Calu3 (cell line): ENCODE measurements at regions of chr11 and their contacts with region 1.

Region 1: GRCh38 chr11:6353367-6353987 is 33.2 kb upstream of the CAVIN3 start:
- DNase-seq: peak; percentile 78
- H3K4me3 Mint-ChIP-seq: no peak overlapping the region
- H3K27ac Mint-ChIP-seq: no peak overlapping the region
- H3K4me1 Mint-ChIP-seq: peaks cover 22% of the 10 kb centered on the region
- H3K27me3 Mint-ChIP-seq: no peaks in the 10 kb centered on the region
- CTCF ChIP-seq: peak; percentile 93

Region 2: DNA sequence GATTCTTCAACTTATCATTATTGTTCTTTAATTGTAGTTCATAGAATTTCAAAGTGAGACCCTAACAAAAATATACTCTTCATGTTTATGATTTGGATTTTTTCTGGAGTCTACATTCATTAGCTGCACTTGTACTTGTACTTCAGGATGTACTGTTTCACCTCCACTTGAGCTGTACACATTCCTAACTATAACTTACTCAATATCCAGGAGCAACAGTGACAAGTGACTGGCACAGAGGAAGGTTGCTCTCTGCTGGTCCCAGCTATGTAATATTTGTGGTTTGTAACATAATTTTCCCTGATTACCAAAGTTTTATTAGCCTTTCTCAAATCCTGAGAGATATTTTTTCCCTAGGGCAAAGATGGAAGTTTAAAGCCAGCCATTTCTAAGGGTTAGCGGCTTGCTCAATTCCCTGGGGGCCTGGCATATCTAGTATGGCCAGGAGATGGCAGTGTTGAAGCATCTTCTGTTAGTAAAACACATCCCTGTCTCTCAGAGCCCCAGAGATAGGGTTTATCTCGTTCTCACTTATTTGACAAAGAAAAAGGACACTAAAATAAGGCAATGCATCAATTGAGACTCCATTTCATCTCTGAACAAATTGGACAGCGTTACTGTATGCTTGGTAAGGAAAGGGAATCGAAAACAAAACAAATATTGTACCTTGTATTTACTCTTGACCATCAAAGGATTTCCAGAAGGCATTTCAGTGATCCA is 1229.5 kb before region 1 on chr11:
- CTCF ChIA-PET with region 1: no interaction called
- intact Hi-C with region 1: loop called (anchors 5 kb)
- DNase-seq: peak; percentile 68
- H3K4me3 Mint-ChIP-seq: no peak overlapping the region
- H3K27ac Mint-ChIP-seq: no peak overlapping the region
- H3K4me1 Mint-ChIP-seq: no peaks in the 10 kb centered on the region
- H3K27me3 Mint-ChIP-seq: peaks cover 23% of the 10 kb centered on the region
- CTCF ChIP-seq: peak; percentile 54

Region 3: GRCh38 chr11:5992604-5993251 is 360.7 kb before region 1 on chr11:
- CTCF ChIA-PET with region 1: interaction called, 9 read pairs
- intact Hi-C with region 1: loop called (anchors 1 kb)
- DNase-seq: peak; percentile 10
- H3K4me3 Mint-ChIP-seq: no peak overlapping the region
- H3K27ac Mint-ChIP-seq: no peak overlapping the region
- H3K4me1 Mint-ChIP-seq: no peaks in the 10 kb centered on the region
- H3K27me3 Mint-ChIP-seq: peaks cover 2% of the 10 kb centered on the region
- CTCF ChIP-seq: no peak

Region 4: GRCh38 chr11:6251120-6251733 is 102.2 kb before region 1 on chr11:
- CTCF ChIA-PET with region 1: interaction called, 33 read pairs
- intact Hi-C with region 1: loop called (anchors 1 kb)
- DNase-seq: peak; percentile 83
- H3K4me3 Mint-ChIP-seq: no peak overlapping the region
- H3K27ac Mint-ChIP-seq: no peak overlapping the region
- H3K4me1 Mint-ChIP-seq: no peaks in the 10 kb centered on the region
- H3K27me3 Mint-ChIP-seq: no peaks in the 10 kb centered on the region
- CTCF ChIP-seq: peak; percentile 76

Region 5: DNA sequence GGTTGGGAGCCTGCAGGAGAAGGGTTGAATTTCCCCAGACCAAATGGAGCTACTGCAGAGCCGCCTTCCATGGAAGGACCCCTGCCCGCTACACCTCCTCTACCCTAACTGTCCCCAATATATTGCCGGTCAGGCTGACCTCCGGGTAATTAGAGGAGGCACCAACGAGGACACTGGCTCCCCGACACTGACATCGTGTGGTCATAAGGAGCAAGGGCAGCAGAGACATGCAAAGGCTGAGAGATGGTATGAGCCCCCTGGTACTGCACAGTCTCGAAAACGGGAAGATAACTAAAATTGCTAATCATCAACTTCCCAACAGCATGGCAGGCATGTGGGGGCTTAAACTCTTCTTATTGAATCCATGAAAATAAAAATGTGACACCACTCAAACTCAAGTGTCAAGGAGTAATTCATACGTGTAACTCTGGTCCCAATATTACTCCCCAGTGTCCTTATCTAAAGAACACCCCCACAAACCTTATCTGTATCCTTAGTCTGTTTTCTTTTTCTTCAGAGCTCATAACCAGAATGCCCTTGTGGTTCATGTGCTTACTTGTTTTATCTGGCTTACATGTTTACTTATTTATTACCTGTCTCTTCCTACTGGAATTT is 37.6 kb before region 1 on chr11:
- CTCF ChIA-PET with region 1: interaction called, 6 read pairs
- intact Hi-C with region 1: loop called (anchors 5 kb)
- DNase-seq: peak; percentile 57
- H3K4me3 Mint-ChIP-seq: no peak overlapping the region
- H3K27ac Mint-ChIP-seq: no peak overlapping the region
- H3K4me1 Mint-ChIP-seq: peaks cover 16% of the 10 kb centered on the region
- H3K27me3 Mint-ChIP-seq: no peaks in the 10 kb centered on the region
- CTCF ChIP-seq: peak; percentile 80

Region 6: DNA sequence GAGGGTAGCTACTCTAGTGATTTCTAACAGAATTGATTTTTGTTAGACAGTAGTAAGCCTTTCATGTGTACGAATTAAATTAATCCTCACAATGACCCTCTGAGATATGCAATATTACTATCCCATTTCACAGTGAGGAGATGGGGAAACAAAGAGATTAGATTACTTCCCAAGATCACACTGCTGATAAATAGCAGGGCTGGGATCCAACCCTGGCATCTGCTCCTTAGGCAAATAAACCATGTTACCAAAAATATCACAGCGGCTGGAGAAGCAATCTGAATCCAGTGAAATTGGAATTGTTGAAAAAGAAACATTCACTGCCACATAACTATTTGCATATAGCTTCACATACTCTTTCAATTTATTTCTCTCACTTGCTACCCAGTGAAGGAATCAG is 20.4 kb before region 1 on chr11:
- CTCF ChIA-PET with region 1: no interaction called
- intact Hi-C with region 1: no loop called
- DNase-seq: no peak
- H3K4me3 Mint-ChIP-seq: no peak overlapping the region
- H3K27ac Mint-ChIP-seq: no peak overlapping the region
- H3K4me1 Mint-ChIP-seq: no peaks in the 10 kb centered on the region
- H3K27me3 Mint-ChIP-seq: no peaks in the 10 kb centered on the region
- CTCF ChIP-seq: no peak

Region 7: GRCh38 chr11:6468712-6469495 is 115.4 kb after region 1 on chr11:
- CTCF ChIA-PET with region 1: no interaction called
- intact Hi-C with region 1: no loop called
- DNase-seq: no peak
- H3K4me3 Mint-ChIP-seq: no peak overlapping the region
- H3K27ac Mint-ChIP-seq: no peak overlapping the region
- H3K4me1 Mint-ChIP-seq: peaks cover 2% of the 10 kb centered on the region
- H3K27me3 Mint-ChIP-seq: no peaks in the 10 kb centered on the region
- CTCF ChIP-seq: no peak

Region 8: DNA sequence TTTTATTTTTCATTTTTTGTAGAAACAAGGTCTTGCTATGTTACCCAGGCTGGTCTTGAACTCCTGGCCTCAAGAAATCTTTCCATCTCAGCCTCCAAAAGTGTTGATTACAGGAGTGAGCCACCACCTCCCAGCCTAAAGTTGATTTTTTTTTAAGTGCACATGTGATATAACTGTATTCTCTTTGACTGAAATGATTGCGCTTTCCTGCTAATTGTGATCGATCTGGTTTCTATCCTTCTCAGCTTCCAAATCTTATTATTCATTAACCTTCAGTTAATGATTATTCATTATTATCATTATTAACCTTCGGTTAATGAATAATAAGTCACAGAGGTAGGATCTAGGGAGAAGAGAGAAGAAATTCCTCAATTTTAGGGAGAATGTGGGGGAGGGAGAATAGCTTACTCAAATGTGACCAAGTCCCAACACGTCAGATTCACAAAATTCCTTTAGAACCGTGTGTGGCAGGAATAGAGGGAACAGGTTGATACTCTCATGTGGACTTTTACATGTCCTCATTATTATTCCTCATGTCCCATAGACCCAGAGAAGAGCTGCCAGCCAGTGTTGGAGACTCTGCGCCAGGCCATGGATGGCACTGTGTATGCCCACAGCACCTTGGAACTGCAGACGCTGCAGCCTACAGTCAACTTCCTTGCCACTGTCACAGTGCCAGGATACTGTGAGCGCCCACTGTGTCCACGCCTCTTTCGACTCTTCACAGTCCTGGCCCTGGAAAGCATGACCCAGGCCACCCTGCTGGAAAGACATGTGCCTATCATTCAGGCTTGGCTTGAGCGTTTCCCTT is 202.9 kb after region 1 on chr11:
- CTCF ChIA-PET with region 1: no interaction called
- intact Hi-C with region 1: no loop called
- DNase-seq: no peak
- H3K4me3 Mint-ChIP-seq: no peak overlapping the region
- H3K27ac Mint-ChIP-seq: no peak overlapping the region
- H3K4me1 Mint-ChIP-seq: no peaks in the 10 kb centered on the region
- H3K27me3 Mint-ChIP-seq: no peaks in the 10 kb centered on the region
- CTCF ChIP-seq: no peak